AG04449 (cell line): ENCODE measurements at regions of chr11 and their contacts with region 1.

Region 1: DNA sequence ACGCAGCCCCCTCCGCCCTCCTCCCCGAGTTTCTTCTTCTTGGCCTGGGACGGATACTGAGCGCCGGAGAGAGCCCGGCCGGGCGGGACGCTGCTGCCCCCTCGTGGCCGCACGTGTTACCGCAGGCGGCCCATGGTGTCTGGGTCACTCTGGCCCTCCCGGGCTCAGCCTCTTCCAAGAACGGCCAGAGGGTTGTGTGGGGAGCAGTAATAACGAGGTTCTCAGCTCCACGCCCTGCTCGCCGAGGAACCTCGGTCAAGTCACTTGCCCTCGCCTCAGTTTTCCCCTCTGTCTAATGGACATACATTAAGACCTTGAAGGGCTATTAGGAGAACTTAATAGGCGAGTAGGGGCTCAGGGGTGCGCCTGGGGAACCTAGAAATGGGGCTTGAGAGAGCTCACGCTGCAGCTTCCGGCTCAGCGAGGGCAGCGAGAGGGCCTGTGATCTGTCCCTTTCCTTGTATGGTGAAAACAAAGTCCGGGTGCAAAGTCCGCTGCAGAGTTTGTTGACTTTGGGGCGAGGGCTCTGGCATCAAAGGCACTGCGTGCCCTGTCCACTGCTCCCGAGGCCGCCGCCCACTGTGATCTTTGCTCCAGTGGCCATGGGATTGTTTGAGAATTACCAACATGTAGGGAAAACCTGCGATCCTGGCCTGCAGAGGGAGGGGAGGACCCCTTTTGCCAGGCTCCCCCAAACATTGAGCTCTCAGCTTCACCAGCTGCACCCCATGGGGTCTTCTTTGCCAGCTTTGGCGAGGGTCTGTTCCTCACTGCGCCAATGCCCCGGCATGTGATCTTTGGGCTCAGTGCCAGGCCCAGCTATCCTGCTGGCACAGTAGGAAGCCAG is 14.4 kb upstream of the LRP5 start:
- DNase-seq: no peak
- H3K4me3 ChIP-seq: no peak overlapping the region
- CTCF ChIP-seq: peak; percentile 98

Region 2: DNA sequence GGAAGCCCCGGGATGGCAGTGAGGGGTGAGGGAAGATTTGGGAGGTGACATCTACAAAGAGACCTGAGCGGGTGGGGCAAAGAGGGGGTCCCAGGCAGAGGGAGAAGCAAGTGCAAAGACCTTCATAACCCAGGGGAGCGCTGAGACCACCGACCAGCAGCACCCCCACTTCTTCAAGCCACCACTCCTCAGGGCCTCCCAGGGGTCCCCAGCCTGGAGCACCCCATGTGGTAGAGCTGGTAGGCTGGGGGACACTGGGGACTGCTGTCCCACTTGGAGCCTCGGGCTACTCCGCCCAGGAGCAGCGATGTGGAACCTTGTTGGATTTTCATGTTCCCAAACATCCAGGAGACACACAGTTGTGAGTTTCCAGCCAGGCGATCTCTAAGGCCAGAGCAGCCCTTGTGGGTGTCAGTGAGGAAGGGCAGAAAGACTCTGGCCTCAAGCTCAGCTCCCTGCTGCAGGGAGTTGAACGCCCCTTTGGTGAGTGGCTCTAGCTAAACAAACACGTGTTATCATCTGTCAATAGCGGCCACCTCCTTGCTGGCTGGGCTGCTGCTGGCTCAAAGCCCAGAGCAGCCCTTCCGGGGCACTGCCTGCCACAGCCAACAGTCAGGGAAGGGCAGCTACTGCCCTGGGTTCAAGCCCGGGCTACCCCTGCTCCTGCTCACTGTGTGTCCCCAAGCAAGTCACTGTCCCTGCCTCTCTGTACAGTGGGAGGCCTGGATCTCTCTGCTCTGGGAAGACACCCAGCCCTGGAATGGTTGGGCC is 151.1 kb before region 1 on chr11:
- CTCF ChIA-PET with region 1: no interaction called
- POLR2A ChIA-PET with region 1: no interaction called
- DNase-seq: no peak
- H3K4me3 ChIP-seq: no peak overlapping the region
- CTCF ChIP-seq: no peak

Region 3: DNA sequence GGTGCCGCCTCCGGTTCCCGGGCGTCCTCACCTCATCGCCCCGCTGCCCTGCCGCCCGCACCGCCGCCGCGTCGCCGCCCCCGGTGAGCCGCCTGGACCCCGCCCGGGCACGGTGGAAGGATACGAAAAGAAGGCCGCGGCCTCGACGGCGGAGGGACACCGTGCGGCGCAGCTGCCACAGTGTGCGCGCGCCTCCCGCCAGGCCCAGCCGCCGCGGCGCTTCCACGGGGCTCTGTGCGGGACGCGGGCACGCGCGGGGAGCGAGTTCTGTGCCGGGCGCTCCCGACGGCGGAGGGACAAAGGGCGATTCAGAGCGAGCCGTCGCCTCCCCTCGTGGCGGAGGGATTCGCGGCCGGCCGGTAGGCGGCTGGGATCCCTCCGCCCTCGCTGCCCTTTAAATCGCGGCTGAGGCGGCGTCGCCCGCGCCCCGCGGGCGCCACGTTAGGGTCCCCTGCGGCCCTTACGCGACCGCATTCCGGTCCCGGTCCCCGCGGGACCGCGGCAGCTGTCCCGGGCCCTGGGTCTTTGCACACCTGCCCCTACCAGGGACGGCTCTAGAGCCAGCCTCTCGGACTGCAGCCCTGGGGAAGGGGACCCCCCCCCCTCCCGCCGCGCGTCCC is 84.4 kb before region 1 on chr11:
- CTCF ChIA-PET with region 1: interaction called, 84 read pairs
- POLR2A ChIA-PET with region 1: no interaction called
- DNase-seq: peak; percentile 87
- H3K4me3 ChIP-seq: peak overlapping the region; percentile 92
- CTCF ChIP-seq: no peak

Region 4: GRCh38 chr11:68257475-68258362 is 40.3 kb before region 1 on chr11:
- CTCF ChIA-PET with region 1: interaction called, 150 read pairs
- POLR2A ChIA-PET with region 1: interaction called, 7 read pairs
- DNase-seq: peak; percentile 59
- H3K4me3 ChIP-seq: no peak overlapping the region
- CTCF ChIP-seq: peak; percentile 85

Region 5: GRCh38 chr11:68287419-68287818 is 10.6 kb before region 1 on chr11:
- CTCF ChIA-PET with region 1: interaction called, 76 read pairs
- POLR2A ChIA-PET with region 1: no interaction called
- DNase-seq: no peak
- H3K4me3 ChIP-seq: no peak overlapping the region
- CTCF ChIP-seq: no peak

Region 6: DNA sequence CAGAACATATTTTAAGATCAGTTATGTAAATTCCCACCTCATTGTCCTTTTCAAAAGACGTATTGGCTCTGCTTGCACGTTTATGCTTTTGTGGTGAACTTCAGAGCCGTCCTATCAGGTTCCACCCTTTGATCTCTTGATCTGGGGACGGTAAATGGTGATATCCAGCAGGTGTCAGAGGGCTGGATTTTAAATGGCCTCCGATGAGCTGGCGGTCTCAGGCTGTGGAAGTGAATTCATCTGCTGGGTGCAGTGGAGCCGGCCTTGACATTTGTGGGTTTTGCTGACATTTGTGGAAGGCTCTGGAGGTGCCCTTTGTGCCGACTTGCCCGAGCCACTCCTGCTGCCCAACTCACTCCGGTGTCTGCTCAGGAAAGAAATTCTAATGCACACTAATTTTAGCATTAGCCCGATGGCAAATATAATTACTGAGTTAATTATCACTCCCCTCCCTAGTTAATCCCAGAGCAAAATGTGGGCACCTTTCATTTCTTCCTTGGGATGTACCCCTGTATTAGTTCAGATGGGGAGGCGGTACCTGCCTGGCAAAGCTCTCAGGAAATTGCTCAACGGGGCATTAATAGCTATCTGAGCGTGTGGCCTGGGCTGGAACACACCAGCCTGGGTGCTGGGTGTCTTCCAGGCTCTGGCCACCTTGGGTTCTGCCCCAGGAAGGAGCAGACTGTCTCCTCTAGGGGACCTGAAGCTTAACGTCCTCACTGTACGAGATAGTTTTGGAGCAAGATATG is 23.4 kb after region 1 on chr11:
- CTCF ChIA-PET with region 1: interaction called, 14 read pairs
- POLR2A ChIA-PET with region 1: no interaction called
- DNase-seq: no peak
- H3K4me3 ChIP-seq: no peak overlapping the region
- CTCF ChIP-seq: no peak

Region 7: DNA sequence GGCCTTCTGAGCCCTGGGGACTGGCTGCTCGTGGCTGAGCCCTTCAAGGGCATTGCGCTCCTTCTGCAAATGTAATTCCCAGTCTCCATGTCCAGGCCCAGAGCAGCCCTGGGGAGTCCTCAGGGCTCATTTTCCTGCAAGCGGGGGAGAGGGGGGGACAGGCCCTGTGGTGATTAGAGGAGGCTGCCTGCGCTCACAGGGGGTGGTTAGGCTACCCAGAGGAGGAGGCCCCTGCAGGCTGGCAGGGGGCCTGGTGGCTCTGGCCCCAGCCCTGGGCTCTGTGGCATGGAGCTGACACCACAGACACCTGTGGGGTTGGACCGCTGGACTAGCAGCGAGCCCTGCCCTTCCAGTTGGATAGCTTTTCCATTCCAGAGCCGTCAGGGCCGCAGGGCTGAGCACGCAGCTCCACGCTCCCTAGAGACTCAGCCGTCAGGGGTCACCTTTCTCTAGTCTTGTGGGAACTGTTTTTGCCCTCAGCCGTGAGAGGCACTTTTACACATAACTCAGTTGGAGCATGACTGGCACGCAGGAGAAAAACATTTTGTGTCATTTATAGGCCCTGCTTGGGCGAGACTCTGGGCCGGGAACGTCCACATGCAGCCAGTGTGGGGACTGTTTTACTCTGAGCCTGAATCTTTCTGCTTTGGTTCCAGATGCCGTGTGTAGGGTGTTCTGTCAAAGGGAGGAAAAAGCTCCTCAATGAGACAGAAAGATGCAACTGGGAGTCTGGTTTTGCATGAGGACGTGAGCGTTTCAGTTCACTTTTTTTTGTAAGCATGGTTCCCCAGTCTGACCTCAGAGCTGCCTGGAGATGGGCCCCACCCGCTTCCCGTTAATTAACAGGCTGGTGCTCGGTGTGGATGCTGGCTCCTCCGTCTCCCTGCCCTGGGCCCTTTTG is 72.4 kb after region 1 on chr11:
- CTCF ChIA-PET with region 1: interaction called, 14 read pairs
- POLR2A ChIA-PET with region 1: no interaction called
- DNase-seq: no peak
- H3K4me3 ChIP-seq: no peak overlapping the region
- CTCF ChIP-seq: no peak